GM12878 (cell line): ENCODE measurements at regions of chrX and their contacts with region 1.

Region 1: DNA sequence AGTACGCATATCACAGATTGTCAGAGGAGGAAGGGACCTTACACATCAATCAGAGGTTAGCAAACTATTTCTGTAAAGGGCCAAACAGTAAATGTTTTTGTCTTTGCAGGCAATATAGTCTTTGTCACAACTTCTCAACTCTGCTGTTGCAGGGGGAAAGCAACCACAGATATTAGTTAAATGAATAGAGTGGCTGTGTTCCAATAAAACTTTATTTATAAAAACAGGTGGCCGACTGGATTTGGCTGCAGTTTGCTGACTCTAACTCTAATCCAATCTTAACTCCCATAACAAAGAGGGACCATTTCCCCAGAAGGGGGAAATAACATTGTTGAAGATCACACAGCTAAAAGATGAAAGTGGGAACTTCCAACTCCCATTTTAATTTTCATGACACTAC is 68.5 kb downstream of the COL4A6 start:
- DNase-seq: no peak
- ATAC-seq: no peak
- H3K4me3 ChIP-seq: no peak overlapping the region
- H3K27ac ChIP-seq: no peak overlapping the region
- H3K4me1 ChIP-seq: no peaks in the 10 kb centered on the region
- H3K27me3 ChIP-seq: no peaks in the 10 kb centered on the region
- CTCF ChIP-seq: no peak
- EP300 ChIP-seq: no peak
- POLR2A ChIP-seq: no peak
- RAD21 ChIP-seq: no peak

Region 2: DNA sequence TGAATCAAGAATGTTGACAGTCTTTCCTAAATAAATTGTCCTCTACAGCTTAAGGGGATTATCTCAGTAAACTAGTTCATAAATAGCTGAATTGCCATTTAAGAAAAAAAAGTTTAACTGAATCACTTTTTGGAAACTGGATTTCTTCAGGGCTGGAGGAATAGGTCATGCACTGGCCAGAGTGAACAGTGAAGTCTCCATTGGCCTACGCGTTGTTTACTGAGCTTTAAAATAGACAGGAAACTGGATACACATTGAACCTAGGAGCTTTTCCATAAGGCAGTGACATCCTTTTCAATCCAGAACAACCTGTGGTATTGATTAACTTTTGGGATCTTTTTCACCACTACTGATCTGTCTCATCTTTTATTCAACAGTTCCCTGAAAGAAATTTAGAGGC is 10.5 kb after region 1 on chrX:
- CTCF ChIA-PET with region 1: no interaction called
- POLR2A ChIA-PET with region 1: no interaction called
- RAD21 ChIA-PET with region 1: no interaction called
- SMC1A ChIA-PET with region 1: interaction called, 10 read pairs
- in situ Hi-C with region 1: no loop called
- intact Hi-C with region 1: no loop called
- DNase-seq: no peak
- ATAC-seq: no peak
- H3K4me3 ChIP-seq: no peak overlapping the region
- H3K27ac ChIP-seq: no peak overlapping the region
- H3K4me1 ChIP-seq: no peaks in the 10 kb centered on the region
- H3K27me3 ChIP-seq: no peaks in the 10 kb centered on the region
- CTCF ChIP-seq: no peak
- EP300 ChIP-seq: no peak
- POLR2A ChIP-seq: no peak
- RAD21 ChIP-seq: no peak